ENCODE measurements at regions of chr16 and their contacts with region 1.

Region 1: DNA sequence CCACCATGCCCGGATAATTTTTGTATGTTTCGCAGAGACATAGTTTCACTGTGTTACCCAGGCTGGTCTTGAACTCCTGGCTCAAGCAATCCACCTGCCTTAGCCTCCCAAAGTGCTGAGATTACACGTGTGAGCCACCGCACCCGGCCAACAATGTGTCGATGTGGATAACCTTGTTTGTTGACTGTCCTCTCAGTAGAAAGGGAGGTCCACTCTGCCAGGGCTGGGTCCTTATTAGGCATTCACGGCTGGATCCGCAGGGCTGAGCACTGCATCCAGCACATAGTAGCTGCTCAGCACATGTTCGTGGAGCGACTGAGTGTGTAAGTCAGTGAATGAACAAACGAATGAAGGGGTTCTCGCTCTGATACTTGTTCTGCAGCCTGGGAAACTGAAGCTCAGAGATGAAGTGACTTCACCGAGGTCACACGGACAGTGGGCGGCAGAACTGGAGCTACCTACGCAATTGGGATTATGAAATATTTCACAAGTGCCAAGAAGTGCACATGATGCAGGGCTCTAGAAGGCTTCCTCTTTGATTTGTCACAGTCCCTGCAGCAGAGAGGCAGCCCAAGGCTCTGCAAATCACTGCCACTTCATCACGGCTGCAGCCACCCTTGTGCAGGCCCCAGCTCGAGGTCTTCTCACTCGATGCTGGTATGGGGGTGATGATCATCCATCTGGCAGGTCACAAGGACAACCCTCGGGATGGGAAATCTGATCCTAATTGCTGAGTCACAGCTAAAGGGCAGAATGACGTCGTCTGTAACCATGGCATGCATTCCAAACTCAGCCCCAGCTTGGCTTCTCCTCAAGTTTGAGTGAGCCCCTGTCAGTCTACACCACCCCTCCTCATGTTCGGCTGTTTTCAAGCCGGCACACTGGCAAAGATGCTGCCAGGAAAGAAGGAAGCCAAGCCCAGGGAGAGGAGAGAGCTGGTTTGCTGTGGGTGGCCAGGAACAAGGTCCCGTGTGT is 28.0 kb upstream of the SNN start:
- DNase-seq: peak; percentile 86 to 90
- ATAC-seq: peak; percentile 92
- H3K4me3 ChIP-seq: no peak overlapping the region
- H3K27ac ChIP-seq: peak overlapping the region; percentile 46 to 71
- H3K4me1 ChIP-seq: no peaks in the 10 kb centered on the region
- H3K27me3 ChIP-seq: no peaks in the 10 kb centered on the region

Region 2: GRCh38 chr16:11586856-11587642 is 53.2 kb before region 1 on chr16 and contains the start of gene LITAF:
- intact Hi-C with region 1: loop called (anchors 5 kb)
- DNase-seq: peak; percentile 79 to 92
- ATAC-seq: peak; percentile 84
- H3K4me3 ChIP-seq: peak within 1 kb of the TSS; percentile 95 to 97
- H3K27ac ChIP-seq: peak within 1 kb of the TSS; percentile 95 to 97
- H3K4me1 ChIP-seq: peaks cover 0 to 10% of the 10 kb centered on the region in 2 donors
- H3K27me3 ChIP-seq: no peaks in the 10 kb centered on the region
- total RNA-seq, gene LITAF: 145 to 157 TPM

Measured in aorta (tissue), 5 donors.